HEK293 (cell line): ENCODE measurements at regions of chr17 and their contacts with region 1.

Region 1: DNA sequence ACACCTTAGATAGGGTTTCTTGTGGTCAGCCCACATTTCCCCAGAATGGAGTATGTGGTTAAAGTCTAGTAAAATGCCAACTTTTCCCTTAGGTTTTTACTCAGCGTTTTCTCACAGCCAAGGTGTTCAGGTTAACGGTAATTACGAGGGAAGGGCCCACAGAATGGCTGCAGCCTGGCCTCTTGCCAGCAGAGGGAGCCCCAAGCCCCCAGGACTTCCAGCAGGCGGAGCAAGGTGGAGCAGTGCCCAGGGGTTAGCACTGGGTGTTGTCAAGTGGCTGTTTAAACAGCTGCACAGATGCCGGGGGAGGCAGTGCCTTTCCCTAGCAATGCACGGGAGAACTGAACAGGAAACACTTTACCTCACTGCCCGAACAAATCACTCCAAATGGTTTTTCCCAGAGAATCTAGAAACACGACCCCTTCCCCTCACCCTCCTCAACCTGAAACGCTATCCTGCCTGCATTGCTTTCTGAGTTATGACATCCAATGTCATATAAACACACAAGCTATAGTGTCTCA is 6.6 kb downstream of the PHB1 start:
- H3K4me3 ChIP-seq: no peak overlapping the region
- H3K27ac ChIP-seq: no peak overlapping the region
- H3K4me1 ChIP-seq: no peaks in the 10 kb centered on the region; the same call in 1 of the 2 replicates
- CTCF ChIP-seq: peak; percentile 99

Region 2: DNA sequence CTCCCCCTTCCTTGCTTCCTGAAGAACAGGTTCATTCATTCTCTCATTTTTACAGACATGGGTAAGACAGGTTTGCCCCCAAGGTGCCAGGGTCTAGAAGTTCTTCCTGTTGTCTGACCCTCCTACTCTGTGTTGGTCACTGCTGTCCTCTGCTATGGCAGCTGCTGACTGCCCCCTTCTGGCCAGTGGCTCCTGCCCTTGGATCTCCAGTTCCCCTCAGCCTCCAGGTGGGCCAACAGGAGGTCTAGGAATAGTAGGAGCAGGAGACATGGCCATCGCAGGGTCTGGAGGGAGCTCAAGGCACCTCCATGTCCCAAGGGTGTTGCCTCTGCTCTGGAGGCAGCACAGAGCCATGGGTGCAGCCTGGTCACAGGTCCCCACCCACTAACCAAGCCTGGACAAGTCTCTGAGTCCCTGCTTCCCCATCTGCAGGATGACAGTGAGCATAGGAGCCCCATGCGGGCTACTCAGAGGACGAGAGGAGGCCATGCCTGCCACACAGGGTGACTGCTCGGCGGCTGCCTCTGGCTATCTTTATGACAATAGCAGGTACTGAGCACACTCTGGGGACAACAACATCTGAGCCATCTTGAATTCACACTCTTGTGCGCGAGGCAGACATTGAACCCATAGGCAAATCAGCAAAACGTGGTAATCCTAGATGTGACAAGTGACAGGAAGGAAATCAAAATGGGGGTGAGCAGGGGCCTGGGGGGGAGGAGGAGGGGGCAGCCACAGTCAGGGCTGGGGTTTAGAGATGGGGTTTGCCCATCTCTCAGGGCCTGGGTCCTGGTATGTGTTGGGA is 140.7 kb after region 1 on chr17:
- CTCF ChIA-PET with region 1: interaction called, 174 read pairs
- POLR2A ChIA-PET with region 1: no interaction called
- H3K4me3 ChIP-seq: no peak overlapping the region
- H3K27ac ChIP-seq: no peak overlapping the region
- H3K4me1 ChIP-seq: no peaks in the 10 kb centered on the region
- CTCF ChIP-seq: peak; percentile 66